Mammary epithelial cell (primary cell): ENCODE measurements at regions of chr19 and their contacts with region 1.

Region 1: GRCh38 chr19:58380722-58381466 is at the start of gene ZNF837:
- DNase-seq: peak; percentile 100
- H3K4me3 ChIP-seq: peak within 1 kb of the TSS; percentile 72 to 92 (median 84)
- H3K27ac ChIP-seq: peak within 1 kb of the TSS; percentile 95
- H3K4me1 ChIP-seq: peaks cover 24% of the 10 kb centered on the region
- H3K27me3 ChIP-seq: no peaks in the 10 kb centered on the region
- CTCF ChIP-seq: no peak
- total RNA-seq, gene ZNF837: 2.6 to 4.2 TPM

Region 2: GRCh38 chr19:58228585-58229254 is 152.2 kb before region 1 on chr19 and contains the start of gene ZNF544:
- CTCF ChIA-PET with region 1: no interaction called
- dilution Hi-C with region 1: no loop called
- in situ Hi-C with region 1: no loop called
- intact Hi-C with region 1: loop called (anchors 2 kb)
- DNase-seq: peak; percentile 79
- H3K4me3 ChIP-seq: peak within 1 kb of the TSS; percentile 77 to 98 (median 85)
- H3K27ac ChIP-seq: peak within 1 kb of the TSS; percentile 50
- H3K4me1 ChIP-seq: peaks cover 16% of the 10 kb centered on the region
- H3K27me3 ChIP-seq: no peaks in the 10 kb centered on the region
- CTCF ChIP-seq: peak in 1 of 2 donors; percentile 14
- total RNA-seq, gene ZNF544: 32.3 to 48.3 TPM

Region 3: DNA sequence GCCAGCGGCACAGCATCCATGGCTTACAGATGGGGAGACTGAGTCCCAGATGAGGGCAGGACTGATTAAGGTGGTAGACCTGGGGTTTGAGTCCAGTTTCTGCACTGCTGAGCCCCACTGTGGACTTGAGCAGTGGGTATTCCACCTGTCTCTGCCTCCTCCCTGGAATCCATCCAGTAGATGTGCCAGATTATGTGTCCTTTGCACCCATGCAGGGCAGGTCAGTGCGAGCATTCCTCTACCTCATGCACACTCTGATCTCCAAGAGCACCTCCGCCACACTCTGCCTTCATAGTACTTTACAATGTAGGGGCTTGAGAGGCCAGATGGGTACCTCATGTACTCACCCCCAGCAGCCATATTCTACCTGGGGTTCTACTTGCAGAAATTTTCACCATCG is 44.1 kb before region 1 on chr19:
- CTCF ChIA-PET with region 1: no interaction called
- dilution Hi-C with region 1: no loop called
- in situ Hi-C with region 1: no loop called
- intact Hi-C with region 1: no loop called
- DNase-seq: no peak
- H3K4me3 ChIP-seq: no peak overlapping the region
- H3K27ac ChIP-seq: no peak overlapping the region
- H3K4me1 ChIP-seq: no peaks in the 10 kb centered on the region
- H3K27me3 ChIP-seq: no peaks in the 10 kb centered on the region
- CTCF ChIP-seq: no peak

Region 4: GRCh38 chr19:58346961-58347931 is 33.6 kb before region 1 on chr19:
- CTCF ChIA-PET with region 1: no interaction called
- dilution Hi-C with region 1: no loop called
- in situ Hi-C with region 1: no loop called
- intact Hi-C with region 1: loop called (anchors 1 kb)
- DNase-seq: peak; percentile 52
- H3K4me3 ChIP-seq: peak overlapping the region; percentile 77 to 89 (median 78)
- H3K27ac ChIP-seq: no peak overlapping the region
- H3K4me1 ChIP-seq: peaks cover 10% of the 10 kb centered on the region
- H3K27me3 ChIP-seq: no peaks in the 10 kb centered on the region
- CTCF ChIP-seq: no peak

Region 5: GRCh38 chr19:58400916-58401839 is 20.3 kb after region 1 on chr19:
- CTCF ChIA-PET with region 1: no interaction called
- dilution Hi-C with region 1: no loop called
- in situ Hi-C with region 1: no loop called
- intact Hi-C with region 1: loop called (anchors 1 kb)
- DNase-seq: peak; percentile 100
- H3K4me3 ChIP-seq: peak overlapping the region; percentile 61 to 95 (median 65)
- H3K27ac ChIP-seq: peak overlapping the region; percentile 77
- H3K4me1 ChIP-seq: peaks cover 9% of the 10 kb centered on the region
- H3K27me3 ChIP-seq: no peaks in the 10 kb centered on the region
- CTCF ChIP-seq: peak in 1 of 2 donors; percentile 7

Region 6: DNA sequence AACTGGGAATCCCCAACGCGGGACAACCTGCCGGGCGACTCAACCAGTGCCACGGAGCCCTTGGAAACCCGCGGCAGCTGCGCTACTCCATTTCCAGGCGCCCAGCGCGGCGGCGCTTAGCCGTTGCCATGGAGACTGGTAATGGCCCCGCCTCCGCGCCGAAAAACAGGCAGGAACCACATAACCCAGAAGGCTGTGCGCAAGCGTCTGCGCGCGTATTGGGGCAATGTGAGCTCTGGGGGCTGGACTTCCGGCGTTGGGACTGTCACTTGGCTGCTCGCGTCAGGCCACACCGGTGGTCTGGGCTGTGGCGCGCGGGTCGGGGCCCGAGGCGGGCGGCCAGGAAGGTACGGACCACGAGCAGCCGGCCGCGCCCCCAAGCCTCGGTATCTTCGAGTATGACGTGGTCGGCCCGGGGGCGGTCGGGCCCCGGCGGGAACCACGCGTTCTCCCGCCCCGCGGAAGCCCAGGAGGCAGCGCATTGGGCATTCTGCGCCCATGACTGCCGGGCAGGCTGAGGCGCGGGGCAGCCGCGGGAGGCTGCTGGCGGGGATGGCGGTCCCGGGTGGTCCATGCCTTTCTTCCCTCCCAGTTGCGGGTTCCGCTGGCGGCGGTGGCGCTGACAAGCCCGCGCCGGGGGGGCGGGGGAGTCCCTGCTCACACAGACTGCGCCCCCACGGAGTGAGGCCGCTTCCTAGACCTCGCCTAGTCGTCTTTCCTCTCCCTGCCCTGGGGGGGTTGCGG is 70.6 kb after region 1 on chr19 and contains the start of gene ZNF324B:
- CTCF ChIA-PET with region 1: no interaction called
- dilution Hi-C with region 1: loop called (anchors 5 kb)
- in situ Hi-C with region 1: no loop called
- intact Hi-C with region 1: loop called (anchors 5 kb)
- DNase-seq: peak; percentile 94
- H3K4me3 ChIP-seq: peak within 1 kb of the TSS; percentile 81 to 89 (median 82)
- H3K27ac ChIP-seq: peak within 1 kb of the TSS; percentile 57
- H3K4me1 ChIP-seq: peaks cover 4% of the 10 kb centered on the region
- H3K27me3 ChIP-seq: no peaks in the 10 kb centered on the region
- CTCF ChIP-seq: no peak
- total RNA-seq, gene ZNF324B: 8.3 to 14.2 TPM

Region 7: GRCh38 chr19:58466760-58467589 is 86.1 kb after region 1 on chr19 and contains the start of gene ZNF324:
- CTCF ChIA-PET with region 1: no interaction called
- dilution Hi-C with region 1: no loop called
- in situ Hi-C with region 1: no loop called
- intact Hi-C with region 1: loop called (anchors 2 kb)
- DNase-seq: peak; percentile 96
- H3K4me3 ChIP-seq: peak within 1 kb of the TSS; percentile 70 to 96 (median 79)
- H3K27ac ChIP-seq: peak within 1 kb of the TSS; percentile 66
- H3K4me1 ChIP-seq: peaks cover 15% of the 10 kb centered on the region
- H3K27me3 ChIP-seq: no peaks in the 10 kb centered on the region
- CTCF ChIP-seq: peak in 1 of 2 donors; percentile 20
- total RNA-seq, gene ZNF324: 12.7 to 28.7 TPM